Left cardiac atrium (tissue), 4 donors: ENCODE measurements at regions of chr2 and their contacts with region 1.

Region 1: GRCh38 chr2:173027181-173028128 is 48.2 kb upstream of the MAP3K20 start:
- DNase-seq: peak; percentile 83
- ATAC-seq: peak; percentile 83

Region 2: DNA sequence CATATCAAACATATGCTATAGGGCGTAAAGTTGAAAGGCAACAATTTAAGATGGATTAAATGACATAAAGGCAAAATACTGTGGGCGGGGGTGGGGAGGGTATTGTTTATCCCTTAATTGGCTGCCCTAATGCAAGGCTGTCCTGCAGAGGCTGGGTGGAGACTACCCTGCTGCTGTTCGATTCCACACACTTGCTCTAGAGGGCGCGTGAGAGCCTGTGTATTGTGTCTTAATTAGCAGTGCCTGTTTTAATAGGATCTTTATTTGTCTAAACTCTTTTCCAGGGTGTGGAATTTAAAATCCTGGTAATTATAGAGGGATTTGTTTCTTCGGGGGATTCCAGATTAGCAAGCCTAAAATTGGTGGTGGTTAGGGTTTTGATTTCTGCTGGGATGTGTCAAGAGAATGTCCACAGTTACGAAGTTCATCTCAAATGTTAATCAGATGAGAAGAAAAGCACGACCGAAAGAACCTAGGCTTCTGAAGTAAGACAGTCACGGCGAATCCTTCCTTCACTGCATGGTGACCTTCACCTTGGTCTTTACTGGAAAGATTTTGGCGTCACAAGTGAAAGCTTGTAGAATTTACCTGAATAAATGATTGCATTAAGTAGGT is 55.3 kb before region 1 on chr2:
- intact Hi-C with region 1: loop called in 1 of 2 experiments (anchors 10 kb)
- DNase-seq: peak; percentile 32
- ATAC-seq: no peak

Region 3: GRCh38 chr2:173119069-173119807 is 91.8 kb after region 1 on chr2:
- intact Hi-C with region 1: no loop called
- DNase-seq: peak; percentile 22
- ATAC-seq: peak; percentile 52 to 90

Region 4: GRCh38 chr2:173210270-173211196 is 183.1 kb after region 1 on chr2:
- intact Hi-C with region 1: loop called (anchors 1 to 2 kb)
- DNase-seq: peak; percentile 61
- ATAC-seq: peak; percentile 95